Gastrocnemius medialis (tissue), 4 donors: ENCODE measurements at regions of chr2 and their contacts with region 1.

Region 1: DNA sequence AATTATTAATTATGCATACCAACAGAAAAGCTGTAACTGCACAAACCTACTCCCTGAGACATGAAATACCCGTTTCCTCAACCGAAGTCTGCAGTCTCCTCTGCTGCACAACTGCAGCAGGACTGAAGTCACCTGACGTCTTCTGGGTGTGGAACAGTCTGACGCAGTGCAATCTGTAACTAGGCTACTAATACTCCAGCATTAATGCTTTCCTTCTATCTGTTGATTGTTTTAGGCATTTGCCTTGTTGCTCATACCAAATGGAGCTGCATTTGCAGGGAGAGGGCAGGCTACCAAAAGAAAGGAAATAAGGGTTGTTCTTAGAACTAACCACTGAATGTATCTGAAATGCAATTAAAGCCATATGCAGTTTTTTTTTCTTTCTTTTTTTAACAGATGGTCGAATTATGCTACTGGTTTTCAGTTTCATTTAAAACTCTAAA is 40.1 kb downstream of the RTN4 start:
- DNase-seq: peak; percentile 76 to 82
- ATAC-seq: peak; percentile 85 to 88
- H3K4me3 ChIP-seq: peak overlapping the region; percentile 50 to 63 (median 54)
- H3K27ac ChIP-seq: peak overlapping the region; percentile 89 to 94 (median 91)
- H3K4me1 ChIP-seq: peaks cover 61 to 62% of the 10 kb centered on the region in 2 donors
- H3K27me3 ChIP-seq: no peaks in the 10 kb centered on the region
- CTCF ChIP-seq: no peak
- POLR2A ChIP-seq: peak; percentile 63 to 80

Region 2: GRCh38 chr2:54665436-54665856 is 344.7 kb before region 1 on chr2:
- in situ Hi-C with region 1: no loop called
- intact Hi-C with region 1: loop called (anchors 10 kb)
- DNase-seq: no peak
- ATAC-seq: peak in 1 of 2 donors; percentile 44
- H3K4me3 ChIP-seq: no peak overlapping the region
- H3K27ac ChIP-seq: peak overlapping the region; percentile 67 to 73 (median 71)
- H3K4me1 ChIP-seq: peaks cover 36 to 44% of the 10 kb centered on the region in 2 donors
- H3K27me3 ChIP-seq: no peaks in the 10 kb centered on the region
- CTCF ChIP-seq: peak in 4 of 5 experiments; percentile 38 to 65 (median 54)
- POLR2A ChIP-seq: no peak

Region 3: DNA sequence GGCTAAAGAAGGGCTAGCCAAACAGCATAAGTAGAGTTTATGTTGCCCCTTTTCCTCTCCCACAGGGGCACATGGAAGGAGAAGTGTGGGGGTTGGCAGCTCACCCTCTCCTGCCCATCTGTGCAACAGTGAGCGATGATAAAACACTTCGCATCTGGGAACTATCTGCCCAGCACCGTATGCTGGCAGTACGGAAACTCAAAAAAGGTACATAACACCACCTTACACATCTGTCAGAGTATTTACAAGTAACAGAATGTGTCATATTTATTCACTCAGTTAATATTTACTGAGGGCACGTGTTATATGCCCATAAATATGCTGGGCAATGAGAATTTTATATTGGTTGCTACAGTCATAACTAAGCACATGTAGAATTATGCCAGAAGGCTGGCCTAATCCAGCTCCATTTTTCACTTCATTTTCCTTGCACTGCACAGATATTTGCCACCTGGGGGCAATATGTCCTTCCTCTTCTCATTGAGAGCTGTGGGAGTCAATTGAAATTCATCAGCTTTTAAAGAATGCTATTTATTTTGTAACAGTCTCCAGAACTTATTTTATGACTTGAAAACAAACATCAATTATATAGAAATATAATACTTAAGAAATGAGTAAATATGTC is 110.5 kb before region 1 on chr2:
- in situ Hi-C with region 1: loop called in 3 of 4 experiments (anchors 5 to 10 kb)
- intact Hi-C with region 1: loop called (anchors 1 kb)
- DNase-seq: no peak
- ATAC-seq: peak; percentile 51 to 64
- H3K4me3 ChIP-seq: no peak overlapping the region
- H3K27ac ChIP-seq: peak overlapping the region in 3 of 4 donors; percentile 22 to 72 (median 69)
- H3K4me1 ChIP-seq: peaks cover 16 to 22% of the 10 kb centered on the region in 2 donors
- H3K27me3 ChIP-seq: no peaks in the 10 kb centered on the region
- CTCF ChIP-seq: peak; percentile 21 to 66 (median 44)
- POLR2A ChIP-seq: no peak

Region 4: GRCh38 chr2:54977149-54977548 is 33.0 kb before region 1 on chr2:
- in situ Hi-C with region 1: no loop called
- intact Hi-C with region 1: loop called (anchors 1 kb)
- DNase-seq: no peak
- ATAC-seq: no peak
- H3K4me3 ChIP-seq: peak overlapping the region; percentile 3 to 36 (median 21)
- H3K27ac ChIP-seq: peak overlapping the region; percentile 89 to 94 (median 91)
- H3K4me1 ChIP-seq: peaks cover 85 to 98% of the 10 kb centered on the region in 2 donors
- H3K27me3 ChIP-seq: no peaks in the 10 kb centered on the region
- CTCF ChIP-seq: no peak
- POLR2A ChIP-seq: no peak

Region 5: DNA sequence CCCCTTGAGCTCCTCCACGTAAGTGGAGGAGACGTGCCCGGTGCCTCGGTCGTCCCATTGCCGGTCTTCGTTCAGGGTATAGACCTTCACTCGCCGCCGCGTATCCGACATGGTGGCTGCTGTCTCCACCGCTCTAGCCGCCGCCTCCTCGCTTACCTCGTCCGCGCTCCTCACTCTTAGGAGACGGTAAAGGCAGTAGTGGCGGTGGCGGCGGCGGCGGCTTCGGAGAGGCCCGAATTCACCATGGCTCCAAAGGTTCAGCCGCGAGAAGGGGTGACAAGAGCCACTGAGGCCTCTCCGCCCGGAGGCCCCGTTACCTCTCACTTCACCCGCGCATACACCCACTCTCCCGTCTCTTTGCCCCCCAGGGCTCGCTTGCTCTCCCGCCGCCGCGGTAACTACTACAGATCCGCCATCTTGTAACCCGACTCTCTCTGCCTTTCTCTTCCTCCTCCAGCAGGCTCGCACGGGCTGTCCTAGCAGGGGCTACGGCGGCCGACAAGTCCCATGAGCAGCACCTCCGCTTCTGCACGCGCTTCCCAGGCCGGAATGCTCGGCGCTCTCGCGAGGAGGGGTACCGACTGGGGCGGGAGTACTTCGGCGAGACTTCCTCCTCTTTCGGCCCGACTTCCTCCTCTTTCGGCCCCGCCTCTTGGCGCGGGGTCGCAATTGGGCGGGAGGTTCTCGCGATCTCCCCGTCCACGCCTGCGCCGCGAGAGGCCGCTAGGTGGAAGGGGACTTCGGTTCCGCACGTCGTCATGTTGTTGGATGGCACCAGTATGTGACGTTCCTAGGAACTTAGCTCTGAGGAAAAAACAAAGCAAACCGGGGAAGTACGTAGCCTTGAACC is 607.2 kb after region 1 on chr2 and contains the start of gene PPP4R3B:
- in situ Hi-C with region 1: no loop called
- intact Hi-C with region 1: loop called (anchors 5 kb)
- DNase-seq: peak; percentile 99 to 100
- ATAC-seq: peak; percentile 83 to 86
- H3K4me3 ChIP-seq: peak within 1 kb of the TSS; percentile 85 to 99 (median 94)
- H3K27ac ChIP-seq: peak within 1 kb of the TSS; percentile 90 to 100 (median 96)
- H3K4me1 ChIP-seq: peaks cover 28 to 44% of the 10 kb centered on the region in 2 donors
- H3K27me3 ChIP-seq: no peaks in the 10 kb centered on the region
- CTCF ChIP-seq: peak; percentile 56 to 84 (median 69)
- POLR2A ChIP-seq: peak; percentile 87 to 93
- total RNA-seq, gene PPP4R3B: 20.6 to 30.3 (median 25.4) TPM

Region 6: GRCh38 chr2:55653251-55653650 is 643.1 kb after region 1 on chr2:
- in situ Hi-C with region 1: no loop called
- intact Hi-C with region 1: no loop called
- DNase-seq: no peak
- ATAC-seq: no peak
- H3K4me3 ChIP-seq: no peak overlapping the region
- H3K27ac ChIP-seq: no peak overlapping the region
- H3K4me1 ChIP-seq: no peaks in the 10 kb centered on the region
- H3K27me3 ChIP-seq: no peaks in the 10 kb centered on the region
- CTCF ChIP-seq: no peak
- POLR2A ChIP-seq: no peak